ENCODE measurements at regions of chr12 and their contacts with region 1.

Region 1: DNA sequence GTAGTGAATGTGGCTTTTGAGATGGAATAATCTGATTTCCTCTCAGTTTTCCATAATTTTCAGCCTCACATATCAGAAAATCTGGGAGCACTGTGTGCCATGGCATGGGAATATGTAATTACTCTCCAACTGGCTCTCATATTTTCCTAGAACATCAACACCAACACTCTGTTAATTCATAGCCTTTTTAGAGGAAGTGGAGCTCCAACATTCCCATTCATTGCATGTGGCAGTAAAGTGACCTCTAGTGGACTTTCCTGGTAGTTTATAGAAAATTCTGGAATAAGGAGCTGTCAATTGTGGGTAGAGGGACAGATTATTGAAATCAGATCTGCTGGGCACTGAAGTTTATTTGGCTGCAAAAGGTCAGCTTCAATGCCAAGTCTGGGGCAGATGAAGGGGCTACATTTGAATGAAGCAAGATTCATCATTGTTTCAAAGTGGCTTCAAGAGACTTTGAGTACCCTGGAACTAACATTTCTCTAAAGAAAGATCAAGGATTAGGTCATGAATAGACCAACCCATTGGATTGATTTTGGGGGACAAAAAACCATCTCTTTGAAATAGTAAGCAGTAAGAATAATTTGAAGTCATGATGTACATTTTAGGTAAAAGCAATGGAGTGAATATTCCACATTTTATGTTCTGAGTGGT is 23.6 kb upstream of the USP44 start:
- DNase-seq: peak; percentile 49
- ATAC-seq: peak; percentile 83
- H3K4me3 ChIP-seq: no peak overlapping the region
- H3K27ac ChIP-seq: no peak overlapping the region
- H3K4me1 ChIP-seq: peaks cover 0 to 4% of the 10 kb centered on the region in 2 experiments; a peak in 1 of 4 replicates
- H3K27me3 ChIP-seq: no peaks in the 10 kb centered on the region
- CTCF ChIP-seq: peak; percentile 68 to 79 (median 70)
- POLR2A ChIP-seq: no peak
- RAD21 ChIP-seq: peak; percentile 78

Region 2: GRCh38 chr12:95440401-95440800 is 134.5 kb before region 1 on chr12:
- CTCF ChIA-PET with region 1: no interaction called
- POLR2A ChIA-PET with region 1: no interaction called
- RAD21 ChIA-PET with region 1: no interaction called
- intact Hi-C with region 1: no loop called
- DNase-seq: no peak
- ATAC-seq: no peak
- H3K4me3 ChIP-seq: no peak overlapping the region
- H3K27ac ChIP-seq: no peak overlapping the region
- H3K4me1 ChIP-seq: no peaks in the 10 kb centered on the region
- H3K27me3 ChIP-seq: no peaks in the 10 kb centered on the region
- CTCF ChIP-seq: no peak
- POLR2A ChIP-seq: no peak
- RAD21 ChIP-seq: no peak

Region 3: DNA sequence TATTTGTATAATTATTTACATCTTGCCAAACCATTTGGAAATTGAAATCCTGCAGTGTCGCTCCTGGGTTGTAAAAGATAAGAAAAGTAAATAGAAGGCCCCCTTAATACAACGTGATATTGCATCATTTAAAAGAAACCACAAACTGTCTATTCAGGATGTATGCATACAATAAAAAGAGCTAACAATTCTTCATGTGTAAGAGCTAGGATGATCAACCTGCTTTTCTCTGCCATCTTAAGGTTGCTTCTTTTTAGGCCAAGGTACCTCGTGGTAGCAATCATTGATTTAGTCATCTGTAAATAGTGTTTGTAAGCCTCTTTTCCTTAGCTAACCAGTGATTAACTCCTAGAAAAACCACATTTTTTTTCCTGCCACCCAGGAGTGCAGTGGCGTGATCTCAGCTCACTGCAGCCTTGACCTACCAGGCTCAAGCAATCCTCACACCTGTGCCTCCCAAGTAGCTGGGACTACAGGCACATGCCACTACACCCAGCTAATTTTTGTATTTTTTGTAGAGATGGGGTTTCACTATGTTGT is 20.3 kb before region 1 on chr12:
- CTCF ChIA-PET with region 1: interaction called, 11 read pairs
- POLR2A ChIA-PET with region 1: interaction called, 3 read pairs
- RAD21 ChIA-PET with region 1: no interaction called
- intact Hi-C with region 1: no loop called
- DNase-seq: no peak
- ATAC-seq: no peak
- H3K4me3 ChIP-seq: no peak overlapping the region
- H3K27ac ChIP-seq: no peak overlapping the region
- H3K4me1 ChIP-seq: no peaks in the 10 kb centered on the region
- H3K27me3 ChIP-seq: no peaks in the 10 kb centered on the region
- CTCF ChIP-seq: no peak
- POLR2A ChIP-seq: no peak
- RAD21 ChIP-seq: no peak

Region 4: GRCh38 chr12:95593266-95593871 is 18.4 kb after region 1 on chr12:
- CTCF ChIA-PET with region 1: interaction called, 12 read pairs
- POLR2A ChIA-PET with region 1: no interaction called
- RAD21 ChIA-PET with region 1: no interaction called
- intact Hi-C with region 1: no loop called
- DNase-seq: no peak
- ATAC-seq: no peak
- H3K4me3 ChIP-seq: no peak overlapping the region
- H3K27ac ChIP-seq: no peak overlapping the region
- H3K4me1 ChIP-seq: no peaks in the 10 kb centered on the region
- H3K27me3 ChIP-seq: no peaks in the 10 kb centered on the region
- CTCF ChIP-seq: no peak
- POLR2A ChIP-seq: no peak
- RAD21 ChIP-seq: no peak